ENCODE measurements at regions of chr4 and their contacts with region 1.

Region 1: GRCh38 chr4:76179398-76180318 is 31.5 kb upstream of the NUP54 start:
- DNase-seq: peak; percentile 72
- H3K4me3 ChIP-seq: no peak overlapping the region
- H3K27ac ChIP-seq: no peak overlapping the region
- H3K4me1 ChIP-seq: peaks cover 17% of the 10 kb centered on the region
- H3K27me3 ChIP-seq: no peaks in the 10 kb centered on the region
- CTCF ChIP-seq: peak; percentile 71

Region 2: GRCh38 chr4:74431113-74431826 is 1748.4 kb before region 1 on chr4:
- CTCF ChIA-PET with region 1: no interaction called
- POLR2A ChIA-PET with region 1: no interaction called
- intact Hi-C with region 1: no loop called
- DNase-seq: no peak
- H3K4me3 ChIP-seq: no peak overlapping the region
- H3K27ac ChIP-seq: no peak overlapping the region
- H3K4me1 ChIP-seq: no peaks in the 10 kb centered on the region
- H3K27me3 ChIP-seq: no peaks in the 10 kb centered on the region
- CTCF ChIP-seq: no peak

Region 3: DNA sequence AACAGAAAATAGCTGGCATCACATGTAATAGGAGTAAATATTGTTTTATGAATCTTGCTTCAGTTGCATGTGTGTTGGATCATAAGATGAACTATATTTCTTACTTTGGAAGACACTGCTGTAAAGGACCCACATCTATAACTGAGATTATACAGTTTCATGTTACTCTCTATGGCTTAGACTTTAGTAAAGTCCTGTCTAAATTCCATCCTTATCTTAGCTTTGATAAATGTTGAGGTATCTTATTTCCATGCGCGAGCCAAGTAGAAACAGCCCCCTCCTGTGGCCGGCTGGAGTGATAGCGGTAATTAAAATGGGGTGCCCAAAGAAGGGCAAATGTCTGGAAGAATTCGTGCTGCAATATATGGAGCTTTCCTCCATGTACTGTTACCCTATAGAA is 198.3 kb after region 1 on chr4:
- CTCF ChIA-PET with region 1: interaction called, 7 read pairs
- POLR2A ChIA-PET with region 1: no interaction called
- intact Hi-C with region 1: loop called (anchors 2 kb)
- DNase-seq: peak; percentile 32
- H3K4me3 ChIP-seq: no peak overlapping the region
- H3K27ac ChIP-seq: no peak overlapping the region
- H3K4me1 ChIP-seq: no peaks in the 10 kb centered on the region
- H3K27me3 ChIP-seq: no peaks in the 10 kb centered on the region
- CTCF ChIP-seq: peak; percentile 66

Region 4: DNA sequence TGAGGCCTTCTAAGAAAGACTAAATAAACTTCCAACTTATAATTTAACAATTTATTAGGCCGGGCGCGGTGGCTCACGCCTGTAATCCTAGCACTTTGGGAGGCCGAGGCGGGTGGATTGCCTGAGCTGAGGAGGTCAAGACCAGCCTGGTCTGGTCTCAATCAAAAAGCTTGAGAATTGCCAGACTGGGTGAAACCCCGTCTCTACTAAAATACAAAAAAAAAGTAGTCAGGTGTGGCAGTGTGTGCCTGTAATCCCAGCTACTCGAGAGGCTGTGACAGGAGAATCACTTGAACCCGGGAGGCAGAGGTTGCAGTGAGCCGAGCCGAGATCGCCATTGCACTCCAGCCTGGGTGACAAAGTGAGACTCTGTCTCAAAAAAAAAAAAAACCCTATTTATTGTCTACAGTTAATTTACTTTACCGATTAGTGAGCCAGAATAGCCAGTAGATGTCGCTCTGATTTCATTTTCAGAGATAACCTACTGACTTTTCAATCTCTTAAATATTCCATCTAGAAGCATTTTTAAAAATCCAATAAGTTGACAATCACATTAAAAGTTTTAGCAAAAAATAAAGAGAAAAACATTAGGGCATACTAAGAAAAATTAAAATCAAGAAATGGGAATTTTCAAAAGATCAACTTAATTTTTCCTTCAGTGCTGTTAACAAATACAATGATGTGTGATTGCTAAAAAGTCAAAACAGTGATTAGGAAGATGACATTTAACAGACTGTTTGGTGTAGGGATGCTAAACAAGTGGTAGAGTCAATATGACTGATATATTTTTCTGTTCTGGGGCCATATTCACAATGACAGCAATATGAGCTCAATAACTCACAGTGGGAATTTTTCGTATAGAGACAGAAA is 251.1 kb after region 1 on chr4:
- CTCF ChIA-PET with region 1: no interaction called
- POLR2A ChIA-PET with region 1: no interaction called
- intact Hi-C with region 1: no loop called
- DNase-seq: peak; percentile 59
- H3K4me3 ChIP-seq: no peak overlapping the region
- H3K27ac ChIP-seq: no peak overlapping the region
- H3K4me1 ChIP-seq: no peaks in the 10 kb centered on the region
- H3K27me3 ChIP-seq: no peaks in the 10 kb centered on the region
- CTCF ChIP-seq: peak; percentile 61

Region 5: DNA sequence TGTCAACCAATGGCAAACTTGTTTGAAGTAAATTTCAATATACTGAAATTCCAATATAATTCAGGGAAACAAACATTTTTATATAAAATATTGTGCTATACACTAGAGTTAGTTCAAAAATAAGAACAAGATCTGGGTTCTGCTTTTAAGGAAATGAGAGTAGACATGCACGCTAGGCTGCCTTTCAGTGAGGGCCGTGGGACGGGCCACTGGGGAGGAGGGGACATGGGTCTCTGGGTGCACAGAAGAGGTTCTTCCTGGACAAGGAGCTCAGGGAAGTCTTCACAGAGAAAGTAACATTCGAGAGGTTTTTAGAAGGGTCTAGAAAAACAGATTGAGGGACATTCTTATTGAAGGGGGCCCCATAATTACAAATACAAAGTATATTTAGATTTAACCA is 319.8 kb after region 1 on chr4:
- CTCF ChIA-PET with region 1: no interaction called
- POLR2A ChIA-PET with region 1: no interaction called
- intact Hi-C with region 1: loop called (anchors 10 kb)
- DNase-seq: no peak
- H3K4me3 ChIP-seq: no peak overlapping the region
- H3K27ac ChIP-seq: no peak overlapping the region
- H3K4me1 ChIP-seq: no peaks in the 10 kb centered on the region
- H3K27me3 ChIP-seq: no peaks in the 10 kb centered on the region
- CTCF ChIP-seq: no peak

Measured in A673 (cell line).